ENCODE measurements at regions of chr11 and their contacts with region 1.

Region 1: DNA sequence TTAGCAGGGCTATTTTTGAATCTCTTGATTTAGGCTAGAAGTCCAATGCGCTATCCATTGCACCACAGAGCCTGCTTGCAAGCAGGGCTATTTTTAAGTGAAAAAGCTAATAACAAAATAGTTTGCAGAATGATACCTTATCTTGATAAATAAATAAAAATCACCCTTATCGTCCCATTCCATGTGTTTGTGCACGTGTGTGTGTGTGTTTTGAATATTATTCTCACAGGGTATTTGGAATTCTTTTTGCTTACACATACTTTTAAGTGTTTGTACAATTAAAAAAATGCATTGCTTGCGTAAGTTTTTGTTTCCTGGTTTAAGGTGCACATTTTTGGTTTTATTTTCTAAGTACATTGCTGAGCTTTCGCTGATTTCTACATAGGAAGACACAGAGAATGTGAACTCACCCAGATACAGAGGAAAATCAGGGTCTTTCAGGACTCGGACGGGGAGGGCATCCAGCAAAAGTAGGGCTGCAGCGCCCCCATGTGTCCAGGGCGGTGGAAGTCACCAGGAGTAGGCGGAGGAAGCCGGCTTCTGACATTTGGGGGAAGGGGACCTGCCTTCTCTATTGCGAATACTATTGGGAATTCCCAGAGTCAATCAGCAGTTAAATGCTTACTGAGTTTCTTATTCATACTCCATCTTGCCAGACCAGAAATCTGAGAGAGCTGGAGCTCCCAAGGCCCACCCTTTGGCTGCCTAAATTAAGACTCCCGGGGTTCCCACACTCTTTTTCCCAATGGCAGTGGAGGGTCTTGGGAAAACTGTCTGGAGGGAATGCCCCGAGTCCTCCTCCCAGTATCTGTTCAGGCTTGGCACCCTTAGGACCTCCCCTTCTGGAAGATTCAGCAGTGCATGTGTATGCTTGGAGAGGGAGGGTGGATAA is 27.2 kb downstream of the SLC1A2 start:
- DNase-seq: peak; percentile 21
- H3K4me3 ChIP-seq: peak overlapping the region in 2 of 4 donors; percentile 3 to 38
- H3K27ac ChIP-seq: no peak overlapping the region
- H3K4me1 ChIP-seq: peaks cover 4 to 25% (median 18%) of the 10 kb centered on the region in 3 donors
- H3K27me3 ChIP-seq: peaks cover 0 to 15% (median 0%) of the 10 kb centered on the region in 4 donors
- CTCF ChIP-seq: peak; percentile 70 to 93 (median 87)
- POLR2A ChIP-seq: no peak

Region 2: DNA sequence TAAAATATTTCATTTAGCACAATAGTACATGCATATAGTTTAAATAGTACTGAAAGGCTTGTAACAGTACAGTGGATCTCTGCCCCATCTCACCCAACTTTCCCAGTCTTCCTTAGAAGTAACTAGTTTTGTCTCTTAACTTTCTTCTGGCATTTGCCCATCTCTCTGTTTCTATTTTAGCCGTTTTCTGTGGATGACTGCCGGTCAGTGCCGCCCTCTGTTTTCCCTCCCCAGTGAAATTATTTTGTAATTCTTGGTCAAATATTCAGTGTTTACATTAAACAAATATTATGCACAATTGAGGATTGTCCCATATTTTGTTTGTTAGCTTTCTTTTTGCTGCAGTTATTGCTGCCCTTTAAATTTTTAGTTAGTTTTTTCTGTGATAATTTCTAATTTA is 467.5 kb before region 1 on chr11:
- intact Hi-C with region 1: loop called (anchors 5 kb)
- DNase-seq: no peak
- H3K4me3 ChIP-seq: no peak overlapping the region
- H3K27ac ChIP-seq: peak overlapping the region in 1 of 4 donors; percentile 27
- H3K4me1 ChIP-seq: peaks cover 0 to 48% (median 18%) of the 10 kb centered on the region in 3 donors
- H3K27me3 ChIP-seq: no peaks in the 10 kb centered on the region
- CTCF ChIP-seq: no peak
- POLR2A ChIP-seq: no peak

Region 3: GRCh38 chr11:34997952-34998528 is 394.1 kb before region 1 on chr11:
- intact Hi-C with region 1: loop called (anchors 10 kb)
- DNase-seq: no peak
- H3K4me3 ChIP-seq: no peak overlapping the region
- H3K27ac ChIP-seq: no peak overlapping the region
- H3K4me1 ChIP-seq: peaks cover 4 to 9% (median 6%) of the 10 kb centered on the region in 3 donors
- H3K27me3 ChIP-seq: no peaks in the 10 kb centered on the region
- CTCF ChIP-seq: peak in 5 of 6 experiments; percentile 43 to 84 (median 64)
- POLR2A ChIP-seq: no peak

Region 4: DNA sequence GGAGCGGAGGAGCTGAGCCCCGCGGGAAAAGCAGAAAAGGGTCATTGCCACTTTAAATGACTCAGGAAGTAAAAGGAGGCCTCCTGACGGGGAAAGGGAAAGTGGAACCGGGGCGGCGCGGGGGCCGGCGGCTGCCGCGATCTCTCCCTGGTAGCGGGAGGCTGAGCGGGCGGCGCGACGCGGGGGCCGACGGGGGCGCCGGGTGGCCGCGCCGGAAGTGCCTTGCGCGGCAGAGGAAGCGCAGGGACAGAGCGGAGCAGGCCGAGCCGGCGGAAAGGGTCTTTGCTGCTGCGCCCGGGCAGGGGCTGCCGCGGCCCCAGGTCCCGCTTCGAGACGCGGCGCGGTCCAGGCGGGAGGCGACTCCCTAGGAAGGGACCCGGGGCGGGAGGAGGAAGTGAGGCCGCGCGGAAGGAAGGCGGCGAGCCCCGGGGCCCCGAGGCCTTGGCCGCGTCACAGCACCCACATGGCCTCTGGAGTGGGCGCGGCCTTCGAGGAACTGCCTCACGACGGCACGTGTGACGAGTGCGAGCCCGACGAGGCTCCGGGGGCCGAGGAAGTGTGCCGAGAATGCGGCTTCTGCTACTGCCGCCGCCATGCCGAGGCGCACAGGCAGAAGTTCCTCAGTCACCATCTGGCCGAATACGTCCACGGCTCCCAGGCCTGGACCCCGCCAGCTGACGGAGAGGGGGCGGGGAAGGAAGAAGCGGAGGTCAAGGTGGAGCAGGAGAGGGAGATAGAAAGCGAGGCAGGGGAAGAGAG is 270.7 kb after region 1 on chr11 and contains the start of gene TRIM44:
- intact Hi-C with region 1: no loop called
- DNase-seq: peak; percentile 23
- H3K4me3 ChIP-seq: peak within 1 kb of the TSS; percentile 72 to 88 (median 78)
- H3K27ac ChIP-seq: peak within 1 kb of the TSS; percentile 89 to 97 (median 94)
- H3K4me1 ChIP-seq: peaks cover 11 to 45% (median 14%) of the 10 kb centered on the region in 3 donors
- H3K27me3 ChIP-seq: peaks cover 0 to 2% (median 0%) of the 10 kb centered on the region in 4 donors
- CTCF ChIP-seq: no peak
- POLR2A ChIP-seq: peak in 1 of 4 donors; percentile 54
- total RNA-seq, gene TRIM44: 6.8 to 32.0 (median 13.5) TPM

Measured in esophagus squamous epithelium (tissue), 5 donors.